AG04450 (cell line): ENCODE measurements at regions of chr19 and their contacts with region 1.

Region 1: DNA sequence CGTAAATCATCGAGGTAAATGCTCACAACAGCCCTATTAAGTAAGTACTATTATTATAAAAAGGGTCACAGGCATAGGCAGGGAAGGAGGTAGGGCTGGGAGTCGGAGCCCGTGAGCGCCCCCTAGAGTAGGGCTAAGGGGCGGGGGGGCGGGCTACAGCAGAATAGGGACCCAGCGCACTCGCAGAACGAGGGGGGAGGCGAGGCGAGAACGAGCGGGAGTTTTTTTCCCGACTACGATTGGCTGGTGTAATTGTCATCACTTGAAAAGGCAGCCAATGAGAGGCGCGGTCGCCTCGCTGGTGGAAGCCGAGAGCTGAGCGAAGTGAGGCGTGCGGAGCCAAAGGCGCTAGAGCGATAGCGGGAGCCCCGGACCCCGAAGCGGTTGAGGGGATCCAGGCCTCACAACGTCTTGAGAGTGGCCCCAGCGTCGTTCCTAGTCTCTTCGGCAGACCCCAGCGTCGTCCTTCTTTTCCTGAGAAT is 24.2 kb downstream of the KEAP1 start:
- DNase-seq: peak; percentile 54
- H3K4me3 ChIP-seq: peak overlapping the region; percentile 48
- H3K27ac ChIP-seq: no peak overlapping the region
- H3K27me3 ChIP-seq: no peaks in the 10 kb centered on the region
- CTCF ChIP-seq: peak; percentile 40

Region 2: GRCh38 chr19:10095948-10096621 is 382.9 kb before region 1 on chr19:
- CTCF ChIA-PET with region 1: no interaction called
- POLR2A ChIA-PET with region 1: interaction called, 11 read pairs
- DNase-seq: peak; percentile 56
- H3K4me3 ChIP-seq: peak overlapping the region; percentile 58
- H3K27ac ChIP-seq: peak overlapping the region; percentile 25
- H3K27me3 ChIP-seq: no peaks in the 10 kb centered on the region
- CTCF ChIP-seq: no peak

Region 3: GRCh38 chr19:10403137-10404021 is 75.6 kb before region 1 on chr19 and contains the start of gene CDC37:
- CTCF ChIA-PET with region 1: interaction called, 12 read pairs
- POLR2A ChIA-PET with region 1: no interaction called
- DNase-seq: peak; percentile 91
- H3K4me3 ChIP-seq: peak within 1 kb of the TSS; percentile 99
- H3K27ac ChIP-seq: peak within 1 kb of the TSS; percentile 81
- H3K27me3 ChIP-seq: no peaks in the 10 kb centered on the region
- CTCF ChIP-seq: no peak
- polyA plus RNA-seq, gene CDC37: 268 and 340 TPM in 2 replicates

Region 4: DNA sequence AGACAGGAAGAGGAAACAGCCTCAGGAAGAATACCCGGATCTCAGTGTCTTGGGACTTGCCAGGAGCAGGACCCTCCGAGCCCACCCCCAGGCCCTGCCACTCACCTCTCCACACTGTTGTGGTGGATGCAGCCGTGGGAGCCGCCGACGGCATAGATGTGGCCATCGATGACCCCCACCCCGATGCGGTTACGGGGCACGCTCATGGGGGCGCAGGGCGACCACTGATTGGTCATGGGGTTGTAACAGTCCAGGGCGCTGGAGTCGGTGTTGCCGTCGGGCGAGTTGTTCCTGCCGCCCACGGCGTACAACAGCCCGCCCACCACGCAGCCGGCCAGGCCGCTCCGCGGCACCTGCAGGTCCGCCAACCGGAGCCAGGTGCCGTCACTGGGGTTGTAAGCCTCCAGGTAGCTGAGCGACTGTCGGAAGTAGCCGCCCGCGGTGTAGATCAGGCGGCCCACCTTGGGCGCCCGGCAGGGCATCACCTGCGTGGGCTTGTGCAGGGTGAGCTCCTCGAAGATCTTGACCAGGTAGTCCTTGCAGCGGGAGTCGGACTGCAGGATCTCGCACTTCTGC is 12.6 kb after region 1 on chr19:
- CTCF ChIA-PET with region 1: interaction called, 22 read pairs
- POLR2A ChIA-PET with region 1: no interaction called
- DNase-seq: no peak
- H3K4me3 ChIP-seq: no peak overlapping the region
- H3K27ac ChIP-seq: no peak overlapping the region
- H3K27me3 ChIP-seq: no peaks in the 10 kb centered on the region
- CTCF ChIP-seq: no peak

Region 5: DNA sequence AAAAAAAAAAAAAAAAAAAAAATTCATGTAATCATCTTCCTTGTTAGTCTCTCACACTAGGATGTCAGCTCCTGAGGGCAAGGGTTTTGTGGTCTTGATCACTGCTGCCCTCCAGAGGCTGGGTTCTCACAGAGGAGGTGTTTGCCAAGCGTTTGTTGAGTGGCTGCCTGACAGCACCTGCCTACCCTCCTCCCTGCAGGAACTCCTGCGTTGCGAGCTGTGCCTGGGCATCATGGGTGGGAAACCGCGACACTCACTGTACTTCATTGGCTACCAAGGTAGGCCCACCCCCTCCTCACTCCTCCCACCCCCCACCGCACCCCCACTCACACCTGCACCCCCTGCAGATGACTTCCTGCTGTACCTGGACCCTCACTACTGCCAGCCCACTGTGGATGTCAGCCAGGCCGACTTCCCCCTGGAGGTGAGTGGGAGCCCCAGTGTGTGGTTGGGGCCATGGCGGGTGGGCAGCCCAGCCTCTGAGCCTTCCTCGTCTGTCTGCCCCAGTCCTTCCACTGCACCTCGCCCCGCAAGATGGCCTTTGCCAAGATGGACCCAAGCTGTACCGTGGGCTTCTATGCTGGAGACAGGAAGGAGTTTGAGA is 72.9 kb after region 1 on chr19:
- CTCF ChIA-PET with region 1: interaction called, 11 read pairs
- POLR2A ChIA-PET with region 1: no interaction called
- DNase-seq: no peak
- H3K4me3 ChIP-seq: no peak overlapping the region
- H3K27ac ChIP-seq: no peak overlapping the region
- H3K27me3 ChIP-seq: no peaks in the 10 kb centered on the region
- CTCF ChIP-seq: 0 out of 2 replicates have a peak, but pooled peaks have one; percentile 6

Region 6: DNA sequence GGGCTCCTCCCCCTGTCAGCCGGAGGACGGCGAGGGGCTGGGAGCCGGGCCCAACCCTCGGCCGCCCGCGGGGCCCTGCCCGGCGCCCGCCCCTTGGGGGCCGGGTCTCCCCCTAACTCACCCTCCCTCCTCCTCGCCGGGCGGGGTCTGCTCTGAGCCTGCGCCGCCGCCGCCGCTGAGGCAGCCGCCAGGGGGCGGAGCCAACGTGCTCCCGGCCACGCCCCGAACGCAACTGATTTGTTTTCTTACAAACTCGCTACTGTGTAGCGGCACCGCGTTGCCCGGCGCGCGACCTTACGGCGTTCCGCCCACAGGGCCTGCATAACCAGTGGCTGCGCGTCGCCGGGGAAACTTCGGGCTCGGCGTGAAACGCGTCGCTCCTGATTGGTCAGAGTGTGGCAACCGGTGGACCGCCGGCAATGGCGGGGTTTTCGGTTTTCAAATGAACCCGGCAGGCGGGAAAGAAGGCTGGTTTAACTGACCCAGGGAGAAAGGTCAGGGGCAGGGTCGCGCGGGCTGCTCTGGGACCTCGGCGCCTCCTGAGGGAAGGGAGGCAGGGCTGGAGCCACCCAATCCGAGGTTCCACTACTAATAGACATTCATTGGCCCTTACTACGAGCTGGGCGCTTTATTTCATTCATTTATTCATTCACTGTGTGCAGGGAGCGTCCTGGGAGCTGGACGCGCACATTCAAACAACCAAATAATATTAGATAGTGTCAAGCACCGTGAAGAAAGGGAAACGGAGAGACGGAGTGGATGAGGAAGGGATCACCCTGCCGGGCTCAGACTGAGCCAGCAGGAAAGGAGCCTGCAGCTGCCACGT is 90.1 kb after region 1 on chr19 and contains the start of gene CDKN2D:
- CTCF ChIA-PET with region 1: interaction called, 11 read pairs
- POLR2A ChIA-PET with region 1: no interaction called
- DNase-seq: peak; percentile 99
- H3K4me3 ChIP-seq: peak within 1 kb of the TSS; percentile 69
- H3K27ac ChIP-seq: peak within 1 kb of the TSS; percentile 21
- H3K27me3 ChIP-seq: no peaks in the 10 kb centered on the region
- CTCF ChIP-seq: no peak
- polyA plus RNA-seq, gene CDKN2D: 3.9 and 4.3 TPM in 2 replicates

Region 7: GRCh38 chr19:10644260-10645007 is 165.5 kb after region 1 on chr19:
- CTCF ChIA-PET with region 1: interaction called, 12 read pairs
- POLR2A ChIA-PET with region 1: no interaction called
- DNase-seq: peak; percentile 45
- H3K4me3 ChIP-seq: no peak overlapping the region
- H3K27ac ChIP-seq: no peak overlapping the region
- H3K27me3 ChIP-seq: no peaks in the 10 kb centered on the region
- CTCF ChIP-seq: peak; percentile 95

Region 8: DNA sequence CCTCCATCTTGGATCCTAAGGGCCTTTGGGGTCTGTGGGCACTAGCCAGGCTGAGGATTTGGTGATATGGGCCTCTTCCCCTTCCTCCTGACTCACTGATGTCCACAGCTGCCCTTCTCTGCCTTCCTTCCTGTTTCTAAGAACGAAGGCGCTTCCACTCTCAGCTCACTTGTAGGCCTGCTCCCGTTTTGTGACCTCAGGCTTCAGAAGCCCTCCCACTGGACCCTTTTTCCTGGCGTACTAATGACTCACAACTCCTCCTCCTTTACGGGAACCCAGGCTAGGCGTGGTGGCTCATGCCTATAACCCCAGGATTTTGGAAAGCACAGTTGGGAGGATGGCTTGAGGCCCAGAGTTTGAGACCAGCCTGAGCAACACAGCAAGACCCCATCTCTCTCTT is 301.4 kb after region 1 on chr19:
- CTCF ChIA-PET with region 1: no interaction called
- POLR2A ChIA-PET with region 1: no interaction called
- DNase-seq: no peak
- H3K4me3 ChIP-seq: no peak overlapping the region
- H3K27ac ChIP-seq: no peak overlapping the region
- H3K27me3 ChIP-seq: no peaks in the 10 kb centered on the region
- CTCF ChIP-seq: no peak